Thyroid gland (tissue), 4 donors: ENCODE measurements at regions of chr7 and their contacts with region 1.

Region 1: GRCh38 chr7:134690016-134690415 is 43.4 kb downstream of the BPGM start:
- DNase-seq: peak in 1 of 2 donors; percentile 17
- H3K4me3 ChIP-seq: peak overlapping the region in 1 of 3 donors; percentile 7
- H3K27ac ChIP-seq: peak overlapping the region in 2 of 3 donors; percentile 22 to 67
- H3K4me1 ChIP-seq: peaks cover 11 to 16% of the 10 kb centered on the region in 2 donors
- H3K27me3 ChIP-seq: no peaks in the 10 kb centered on the region
- CTCF ChIP-seq: peak; percentile 19 to 72 (median 42)
- POLR2A ChIP-seq: no peak

Region 2: GRCh38 chr7:134750083-134751062 is 60.4 kb after region 1 on chr7:
- intact Hi-C with region 1: loop called (anchors 5 kb)
- DNase-seq: peak; percentile 49 to 61
- H3K4me3 ChIP-seq: no peak overlapping the region
- H3K27ac ChIP-seq: no peak overlapping the region
- H3K4me1 ChIP-seq: no peaks in the 10 kb centered on the region
- H3K27me3 ChIP-seq: no peaks in the 10 kb centered on the region
- CTCF ChIP-seq: peak in 5 of 6 experiments; percentile 55 to 69 (median 56)
- POLR2A ChIP-seq: no peak

Region 3: DNA sequence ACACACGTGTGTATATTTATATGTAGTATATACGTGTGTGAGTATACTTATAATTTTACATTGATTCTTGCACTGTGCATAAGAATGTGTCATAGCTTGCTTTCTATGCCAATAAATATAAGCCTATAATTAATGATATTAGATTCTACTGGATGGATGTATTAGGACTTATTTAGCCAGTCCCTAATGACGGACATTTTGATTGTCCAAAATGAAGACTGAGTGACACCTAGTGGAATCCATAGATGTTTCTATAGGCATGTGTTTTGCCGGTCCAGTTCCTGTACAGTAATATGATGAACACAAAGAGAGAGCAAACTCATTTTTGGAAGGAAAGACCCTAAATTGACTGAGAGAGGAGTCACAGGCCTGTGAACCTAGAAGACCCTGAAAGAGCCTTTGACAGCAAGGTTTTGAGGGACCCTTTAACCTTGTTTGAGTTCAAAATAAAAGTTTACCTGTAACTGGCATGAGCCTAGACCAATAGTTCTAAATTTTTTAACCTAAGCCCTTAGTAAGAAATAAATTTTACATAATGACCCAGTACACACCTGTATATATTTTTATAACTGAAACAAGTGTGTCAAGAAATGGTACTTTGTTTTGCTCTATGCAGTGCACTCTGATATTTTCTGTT is 253.9 kb after region 1 on chr7:
- intact Hi-C with region 1: loop called (anchors 5 kb)
- DNase-seq: no peak
- H3K4me3 ChIP-seq: no peak overlapping the region
- H3K27ac ChIP-seq: no peak overlapping the region
- H3K4me1 ChIP-seq: peaks cover 17 to 25% of the 10 kb centered on the region in 2 donors
- H3K27me3 ChIP-seq: no peaks in the 10 kb centered on the region
- CTCF ChIP-seq: peak in 4 of 6 experiments; percentile 17 to 36 (median 24)
- POLR2A ChIP-seq: no peak

Region 4: DNA sequence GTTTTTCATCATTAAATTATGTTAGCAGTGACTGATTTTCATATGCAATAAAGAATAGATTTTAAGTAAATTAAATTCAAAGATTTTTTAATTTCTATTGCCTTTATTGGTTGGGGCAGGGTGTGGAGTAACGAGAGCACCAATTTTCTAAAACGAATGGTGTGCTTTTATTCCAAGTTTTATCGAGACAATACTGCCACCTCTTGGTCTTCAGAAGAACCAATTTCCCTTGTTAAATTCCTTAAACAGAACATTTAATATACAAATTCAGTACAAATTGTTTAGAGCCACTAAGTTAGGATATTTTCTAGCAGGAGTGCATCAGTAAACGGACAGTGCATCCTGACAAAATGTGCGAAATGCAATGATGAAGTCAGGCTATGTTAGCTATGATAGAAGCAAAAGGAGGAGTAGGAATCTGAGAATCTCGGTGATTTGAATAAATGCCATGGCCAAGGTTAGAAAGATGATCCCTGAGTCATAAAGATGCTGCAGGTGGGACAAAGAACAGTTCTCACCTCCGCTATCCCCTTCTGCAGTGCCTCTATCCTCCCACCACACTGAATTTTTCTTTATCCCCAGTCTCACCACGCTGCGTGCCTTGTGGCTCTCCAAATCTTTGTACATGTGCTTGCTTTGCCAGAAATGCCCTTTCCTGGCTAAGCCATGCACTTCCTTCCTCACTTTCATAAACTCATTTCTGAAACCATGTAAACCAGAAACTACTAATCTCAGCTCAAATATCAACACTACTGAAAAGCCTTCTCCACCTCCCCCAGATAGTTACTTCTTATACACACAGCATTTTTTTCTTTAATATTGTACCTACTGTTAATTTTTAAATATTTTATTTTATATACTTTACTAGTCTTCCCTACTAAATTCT is 264.4 kb after region 1 on chr7:
- intact Hi-C with region 1: no loop called
- DNase-seq: no peak
- H3K4me3 ChIP-seq: no peak overlapping the region
- H3K27ac ChIP-seq: peak overlapping the region in 2 of 3 donors; percentile 12 to 31
- H3K4me1 ChIP-seq: peaks cover 0 to under 1% of the 10 kb centered on the region in 2 donors
- H3K27me3 ChIP-seq: no peaks in the 10 kb centered on the region
- CTCF ChIP-seq: peak; percentile 12 to 79 (median 48)
- POLR2A ChIP-seq: no peak

Region 5: DNA sequence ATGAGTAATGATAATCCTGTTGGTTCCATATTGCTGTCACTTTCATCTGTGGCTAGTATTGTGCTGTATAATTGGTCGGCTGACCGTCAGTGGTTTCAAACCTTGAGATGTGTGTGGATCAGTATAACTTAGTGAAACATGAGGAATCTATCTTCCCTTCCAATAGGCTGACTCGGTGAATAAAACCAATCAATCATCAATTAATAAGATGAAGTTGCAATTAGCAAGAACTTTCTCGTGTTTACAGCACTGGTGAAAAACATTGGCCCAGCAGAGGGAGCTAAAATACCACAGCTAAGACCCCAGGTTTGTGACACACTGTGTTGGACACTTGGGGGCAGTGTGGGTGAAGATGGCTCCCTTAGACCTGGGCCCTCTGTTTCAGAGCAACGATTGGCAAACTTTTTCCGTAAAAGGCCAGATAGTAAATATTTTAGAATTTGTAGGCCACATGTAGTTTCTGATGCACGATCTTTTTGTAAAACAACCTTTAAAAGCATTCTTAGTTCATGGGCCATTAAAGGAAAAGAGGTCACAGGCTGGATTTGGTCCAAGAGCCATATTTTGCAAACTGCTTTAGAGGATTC is 591.4 kb after region 1 on chr7:
- intact Hi-C with region 1: no loop called
- DNase-seq: peak; percentile 82 to 86
- H3K4me3 ChIP-seq: no peak overlapping the region
- H3K27ac ChIP-seq: no peak overlapping the region
- H3K4me1 ChIP-seq: peaks cover 4 to 5% of the 10 kb centered on the region in 2 donors
- H3K27me3 ChIP-seq: no peaks in the 10 kb centered on the region
- CTCF ChIP-seq: peak; percentile 82 to 99 (median 94)
- POLR2A ChIP-seq: no peak